HAP-1 (cell line): ENCODE measurements at regions of chr4 and their contacts with region 1.

Region 1: GRCh38 chr4:26404743-26405206 is 84.0 kb downstream of the RBPJ start:
- DNase-seq: no peak
- H3K4me3 ChIP-seq: no peak overlapping the region
- H3K4me1 ChIP-seq: peaks cover 7% of the 10 kb centered on the region; the same call in 1 of the 2 replicates
- H3K27me3 ChIP-seq: no peaks in the 10 kb centered on the region

Region 2: DNA sequence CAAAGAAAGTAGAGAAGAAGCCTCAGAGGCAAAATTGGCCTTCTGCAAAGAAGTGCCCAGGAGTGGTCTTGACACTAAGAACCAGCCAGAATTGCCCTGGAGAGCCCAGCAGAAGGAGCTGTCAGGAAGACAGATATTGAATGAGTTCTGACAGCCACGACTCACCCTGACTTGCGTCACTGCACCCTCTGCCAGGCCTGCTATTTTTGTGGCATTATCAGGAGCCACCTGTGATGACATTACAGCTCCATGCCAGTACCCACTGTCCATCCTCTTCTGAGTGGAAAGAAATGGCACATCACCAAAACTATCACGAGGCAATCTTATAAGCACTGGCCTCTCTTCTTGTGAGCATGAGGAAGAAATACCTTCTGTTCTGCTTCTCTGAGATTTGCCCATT is 423.0 kb before region 1 on chr4:
- in situ Hi-C with region 1: loop called (anchors 10 kb)
- DNase-seq: no peak
- H3K4me3 ChIP-seq: no peak overlapping the region
- H3K4me1 ChIP-seq: no peaks in the 10 kb centered on the region
- H3K27me3 ChIP-seq: no peaks in the 10 kb centered on the region

Region 3: DNA sequence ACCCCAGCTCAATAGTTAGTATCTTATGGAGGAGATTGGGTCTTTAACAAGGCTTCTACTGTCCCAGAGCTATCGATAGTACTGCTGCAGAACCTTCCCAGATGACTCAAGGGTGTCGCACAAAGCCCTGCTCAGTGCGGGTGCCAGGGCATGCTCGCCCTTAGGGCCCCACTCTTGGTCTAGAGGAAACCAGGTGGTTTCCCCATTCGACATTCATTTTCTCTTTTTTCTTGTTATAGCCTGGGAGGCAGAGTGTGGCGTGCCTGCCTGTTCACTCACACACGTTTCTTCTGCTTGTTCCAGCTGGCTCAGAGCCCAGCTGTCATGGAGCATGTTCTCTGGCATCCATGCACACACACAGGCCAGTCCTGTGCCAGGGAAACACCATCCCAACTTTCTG is 346.2 kb before region 1 on chr4:
- in situ Hi-C with region 1: loop called (anchors 10 kb)
- DNase-seq: no peak
- H3K4me3 ChIP-seq: no peak overlapping the region
- H3K4me1 ChIP-seq: no peaks in the 10 kb centered on the region
- H3K27me3 ChIP-seq: no peaks in the 10 kb centered on the region

Region 4: GRCh38 chr4:26235500-26235899 is 169.3 kb before region 1 on chr4:
- in situ Hi-C with region 1: no loop called
- DNase-seq: no peak
- H3K4me3 ChIP-seq: no peak overlapping the region
- H3K4me1 ChIP-seq: peaks cover 13% of the 10 kb centered on the region
- H3K27me3 ChIP-seq: no peaks in the 10 kb centered on the region

Region 5: DNA sequence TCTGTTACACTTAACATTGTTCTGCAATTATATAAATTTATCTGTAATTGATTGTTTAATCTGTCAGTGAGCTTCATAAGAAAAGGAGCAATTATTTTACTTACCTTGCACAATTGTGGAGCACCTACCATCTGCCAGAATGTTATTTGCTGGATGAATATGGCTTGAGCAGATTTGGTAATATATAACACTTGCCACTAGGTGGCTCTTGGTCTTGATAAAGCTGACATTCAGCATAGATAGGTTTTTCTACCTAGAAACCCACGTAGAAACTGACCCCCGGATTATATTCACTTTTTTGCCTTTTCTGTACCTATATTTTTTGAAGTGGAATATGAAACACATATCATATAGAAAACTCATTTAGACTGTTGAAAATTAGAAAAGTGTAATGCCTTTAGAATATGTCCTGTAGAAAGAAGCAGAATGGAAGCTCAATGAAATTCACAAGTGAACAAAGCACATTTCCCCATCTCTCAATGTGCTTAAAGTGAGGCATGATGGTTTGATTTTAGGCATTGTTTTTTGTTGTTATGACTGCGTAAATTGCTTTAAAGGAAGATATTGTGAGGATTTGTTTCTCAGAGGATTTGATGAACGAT is 74.5 kb before region 1 on chr4:
- in situ Hi-C with region 1: loop called (anchors 10 kb)
- DNase-seq: peak; percentile 27 to 61
- H3K4me3 ChIP-seq: no peak overlapping the region
- H3K4me1 ChIP-seq: peaks cover 5% of the 10 kb centered on the region; the same call in 1 of the 2 replicates
- H3K27me3 ChIP-seq: no peaks in the 10 kb centered on the region

Region 6: GRCh38 chr4:26936284-26937065 is 531.7 kb after region 1 on chr4:
- in situ Hi-C with region 1: no loop called
- DNase-seq: no peak
- H3K4me3 ChIP-seq: no peak overlapping the region
- H3K4me1 ChIP-seq: peaks cover 7% of the 10 kb centered on the region
- H3K27me3 ChIP-seq: no peaks in the 10 kb centered on the region